Activated T-helper 2 cell treated with anti-CD3 and anti-CD28 coated beads, Interferon-gamma antibody, Interleukin-2, Interleukin-4, amounts not matched to agents 10 μg/mL and 5 μg/mL and 100 μg/mL, durations not matched to agents 14 hours and 24 hours and 36 hours (primary cell): ENCODE measurements at regions of chr5 and their contacts with region 1.

Region 1: GRCh38 chr5:42994246-42995151 is 45.6 kb downstream of the ANXA2R start:
- DNase-seq: peak; percentile 86
- H3K4me3 Mint-ChIP-seq: peak overlapping the region; percentile 100
- H3K27ac Mint-ChIP-seq: peak overlapping the region; percentile 100
- H3K4me1 Mint-ChIP-seq: peaks cover 32% of the 10 kb centered on the region
- H3K27me3 Mint-ChIP-seq: no peaks in the 10 kb centered on the region

Region 2: GRCh38 chr5:42908509-42909488 is 85.7 kb before region 1 on chr5:
- intact Hi-C with region 1: loop called (anchors 2 kb)
- DNase-seq: peak; percentile 86
- H3K4me3 Mint-ChIP-seq: peak overlapping the region; percentile 77
- H3K27ac Mint-ChIP-seq: peak overlapping the region; percentile 14
- H3K4me1 Mint-ChIP-seq: peaks cover 16% of the 10 kb centered on the region
- H3K27me3 Mint-ChIP-seq: peaks cover 31% of the 10 kb centered on the region

Region 3: DNA sequence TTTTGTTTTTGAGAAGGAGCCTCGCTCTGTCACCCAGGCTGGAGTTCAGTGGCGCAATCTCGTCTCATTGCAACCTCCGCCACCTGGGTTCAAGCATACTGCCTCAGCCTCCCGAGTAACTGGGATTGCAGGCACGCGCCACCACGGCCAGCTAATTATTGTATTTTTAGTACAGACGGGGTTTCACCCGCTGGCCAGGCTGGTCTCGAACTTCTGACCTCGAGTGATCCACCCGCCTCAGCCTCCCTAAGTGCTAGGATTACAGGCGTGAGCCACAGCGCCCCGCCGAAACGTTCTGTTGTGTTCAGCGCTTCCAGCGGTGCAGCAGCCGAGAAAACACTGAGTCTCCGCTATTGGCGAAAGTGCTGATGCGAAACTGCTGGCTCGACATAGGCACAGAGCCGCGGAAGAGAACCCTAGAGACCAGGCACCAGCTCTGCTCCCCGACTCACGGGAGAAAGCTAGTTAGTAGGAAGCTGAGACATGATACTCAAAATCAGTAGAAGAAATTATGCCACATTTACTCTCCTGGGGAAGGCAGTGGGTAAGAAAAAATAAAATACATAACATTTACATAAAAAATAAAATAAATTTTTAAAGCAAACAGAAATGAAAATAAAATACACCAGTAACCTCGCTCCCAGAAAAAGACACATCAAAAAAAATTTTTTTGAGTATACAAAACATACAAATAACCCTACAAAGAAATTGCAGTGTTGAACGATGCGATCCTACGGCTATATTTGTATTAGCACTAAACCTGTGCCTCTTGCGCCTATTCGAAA is 14.1 kb after region 1 on chr5:
- intact Hi-C with region 1: loop called (anchors 1 kb)
- DNase-seq: peak; percentile 88
- H3K4me3 Mint-ChIP-seq: peak overlapping the region; percentile 85
- H3K27ac Mint-ChIP-seq: peak overlapping the region; percentile 95
- H3K4me1 Mint-ChIP-seq: peaks cover 24% of the 10 kb centered on the region
- H3K27me3 Mint-ChIP-seq: no peaks in the 10 kb centered on the region

Region 4: DNA sequence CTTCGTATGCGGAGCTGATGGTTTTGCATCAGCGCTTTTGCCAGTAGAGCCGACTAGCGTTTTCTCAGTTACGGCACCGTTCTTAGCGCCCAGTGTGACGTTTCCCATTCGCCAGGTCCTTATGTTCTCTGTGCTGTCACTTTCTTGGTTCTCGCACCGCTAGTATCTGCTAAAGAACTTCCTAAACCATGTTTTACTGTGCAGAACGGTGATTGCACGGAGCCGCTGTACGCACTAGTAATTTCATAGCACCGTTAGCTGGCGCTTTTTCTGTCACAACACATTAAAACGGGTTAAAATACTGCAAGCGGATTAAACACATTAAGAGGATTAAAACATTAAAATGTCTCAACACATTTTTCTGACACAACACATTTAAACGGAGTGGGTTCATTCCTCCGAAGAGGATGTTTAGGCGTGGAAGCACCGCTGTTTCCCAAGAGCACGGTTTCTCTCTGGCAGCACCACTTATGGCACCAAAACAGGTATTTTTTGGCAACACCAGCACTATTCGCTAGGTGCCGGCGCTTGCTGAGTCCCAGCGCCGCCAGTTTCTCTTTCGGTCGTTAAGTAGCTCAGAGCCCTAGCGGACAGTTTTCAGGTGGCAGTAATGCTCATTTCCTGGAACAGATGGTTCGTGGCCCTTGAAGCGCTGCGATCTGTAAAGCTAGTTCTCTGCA is 25.3 kb after region 1 on chr5:
- intact Hi-C with region 1: loop called (anchors 1 kb)
- DNase-seq: peak; percentile 84
- H3K4me3 Mint-ChIP-seq: peak overlapping the region; percentile 96
- H3K27ac Mint-ChIP-seq: peak overlapping the region; percentile 99
- H3K4me1 Mint-ChIP-seq: peaks cover 38% of the 10 kb centered on the region
- H3K27me3 Mint-ChIP-seq: no peaks in the 10 kb centered on the region

Region 5: DNA sequence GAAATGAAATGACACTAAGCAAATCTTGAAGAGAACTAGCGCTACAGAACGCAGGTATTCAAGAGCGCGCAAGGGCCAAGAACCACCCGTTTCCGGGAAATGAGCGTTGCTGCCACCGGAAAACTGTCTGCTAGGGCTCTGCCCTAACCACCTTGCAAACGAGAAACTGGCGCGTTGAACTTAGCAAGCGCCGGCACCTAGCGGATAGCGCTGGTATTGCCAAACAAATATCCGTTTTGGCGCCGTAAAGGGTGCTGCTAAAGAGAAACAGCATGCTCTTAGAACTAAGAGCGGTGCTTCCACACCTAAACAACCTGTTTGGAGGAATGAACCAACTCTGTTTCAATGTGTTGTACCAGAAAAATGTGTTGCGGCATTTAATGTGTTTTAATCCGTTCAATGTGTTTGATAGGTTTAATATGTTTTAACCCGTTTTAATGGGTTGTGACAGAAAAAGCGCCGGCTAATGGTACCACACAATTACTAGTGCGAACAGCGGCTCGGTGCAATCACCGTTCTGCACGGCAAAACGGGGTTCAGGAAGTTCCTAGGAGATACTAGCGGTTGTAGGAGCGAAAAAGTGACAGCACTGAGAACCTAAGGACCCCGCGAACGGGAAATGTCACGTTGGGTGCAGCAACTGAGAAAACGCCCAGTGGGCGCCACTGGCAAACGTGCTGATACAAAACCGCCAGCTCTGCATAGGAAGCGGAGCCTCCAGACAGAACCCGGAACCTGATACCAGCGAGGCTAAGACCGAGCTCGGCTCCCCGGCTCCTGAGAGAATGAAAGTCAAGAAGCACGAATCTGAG is 46.0 kb after region 1 on chr5 and contains the start of gene ANXA2R:
- intact Hi-C with region 1: loop called (anchors 1 kb)
- DNase-seq: peak; percentile 95
- H3K4me3 Mint-ChIP-seq: peak within 1 kb of the TSS; percentile 92
- H3K27ac Mint-ChIP-seq: peak within 1 kb of the TSS; percentile 97
- H3K4me1 Mint-ChIP-seq: peaks cover 47% of the 10 kb centered on the region
- H3K27me3 Mint-ChIP-seq: no peaks in the 10 kb centered on the region
- total RNA-seq, gene ANXA2R: 2.1 and 2.5 TPM in 2 replicates

Region 6: GRCh38 chr5:43191740-43192557 is 197.4 kb after region 1 on chr5 and contains the start of gene NIM1K:
- intact Hi-C with region 1: loop called (anchors 5 kb)
- DNase-seq: peak; percentile 35
- H3K4me3 Mint-ChIP-seq: peak within 1 kb of the TSS; percentile 82
- H3K27ac Mint-ChIP-seq: peak within 1 kb of the TSS; percentile 59
- H3K4me1 Mint-ChIP-seq: peaks cover 24% of the 10 kb centered on the region
- H3K27me3 Mint-ChIP-seq: peaks cover 10% of the 10 kb centered on the region
- total RNA-seq, gene NIM1K: 0.76 and 1.1 TPM in 2 replicates